ENCODE measurements at regions of chr16 and their contacts with region 1.

Region 1: GRCh38 chr16:77043076-77043475 is 147.9 kb upstream of the MON1B start:
- DNase-seq: no peak
- H3K4me3 Mint-ChIP-seq: no peak overlapping the region
- H3K27ac Mint-ChIP-seq: no peak overlapping the region
- H3K4me1 Mint-ChIP-seq: no peaks in the 10 kb centered on the region
- H3K27me3 Mint-ChIP-seq: no peaks in the 10 kb centered on the region

Region 2: GRCh38 chr16:75794426-75794825 is 1248.7 kb before region 1 on chr16:
- CTCF ChIA-PET with region 1: no interaction called
- POLR2A ChIA-PET with region 1: no interaction called
- intact Hi-C with region 1: loop called (anchors 5 kb)
- DNase-seq: no peak
- H3K4me3 Mint-ChIP-seq: no peak overlapping the region
- H3K27ac Mint-ChIP-seq: no peak overlapping the region
- H3K4me1 Mint-ChIP-seq: no peaks in the 10 kb centered on the region
- H3K27me3 Mint-ChIP-seq: peaks cover 5% of the 10 kb centered on the region